ENCODE measurements at regions of chr15 and their contacts with region 1.

Region 1: GRCh38 chr15:33086507-33087121 is 107.9 kb downstream of the FMN1 start:
- H3K4me3 Mint-ChIP-seq: no peak overlapping the region
- H3K27ac Mint-ChIP-seq: no peak overlapping the region
- H3K4me1 Mint-ChIP-seq: peaks cover 6% of the 10 kb centered on the region
- H3K27me3 Mint-ChIP-seq: no peaks in the 10 kb centered on the region

Region 2: DNA sequence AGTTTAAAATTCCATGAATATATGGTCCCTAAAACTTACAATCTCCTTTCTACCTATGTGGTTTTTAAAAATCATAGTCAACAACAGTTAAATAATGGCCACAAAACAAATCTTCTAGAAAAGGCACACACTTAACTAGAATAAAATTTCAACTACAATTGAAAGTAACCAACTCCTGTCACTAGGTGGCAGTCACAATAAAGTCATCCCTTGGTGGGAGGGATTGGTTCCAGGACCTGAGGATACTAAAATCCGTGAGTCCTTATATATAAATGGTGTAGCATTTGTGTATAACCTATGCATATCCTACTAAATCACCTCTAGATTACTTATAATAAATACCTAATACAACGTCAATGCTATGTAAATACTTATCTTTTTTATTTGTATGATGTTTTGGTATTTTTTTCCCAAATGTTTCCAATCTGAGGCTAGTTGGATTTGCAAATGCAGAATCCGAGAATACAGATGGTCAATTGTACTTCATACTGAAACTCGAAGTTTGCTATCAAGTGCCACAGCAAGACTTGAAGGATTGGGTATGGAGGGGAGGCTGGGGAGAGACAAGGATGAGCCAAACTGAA is 64.7 kb before region 1 on chr15:
- intact Hi-C with region 1: loop called (anchors 5 kb)
- H3K4me3 Mint-ChIP-seq: no peak overlapping the region
- H3K27ac Mint-ChIP-seq: peak overlapping the region; percentile 74
- H3K4me1 Mint-ChIP-seq: peaks cover 10% of the 10 kb centered on the region
- H3K27me3 Mint-ChIP-seq: no peaks in the 10 kb centered on the region

Region 3: GRCh38 chr15:33074942-33075341 is 11.7 kb before region 1 on chr15:
- intact Hi-C with region 1: no loop called
- H3K4me3 Mint-ChIP-seq: no peak overlapping the region
- H3K27ac Mint-ChIP-seq: no peak overlapping the region
- H3K4me1 Mint-ChIP-seq: no peaks in the 10 kb centered on the region
- H3K27me3 Mint-ChIP-seq: peaks cover 4% of the 10 kb centered on the region